ENCODE measurements at regions of chr4 and their contacts with region 1.

Region 1: DNA sequence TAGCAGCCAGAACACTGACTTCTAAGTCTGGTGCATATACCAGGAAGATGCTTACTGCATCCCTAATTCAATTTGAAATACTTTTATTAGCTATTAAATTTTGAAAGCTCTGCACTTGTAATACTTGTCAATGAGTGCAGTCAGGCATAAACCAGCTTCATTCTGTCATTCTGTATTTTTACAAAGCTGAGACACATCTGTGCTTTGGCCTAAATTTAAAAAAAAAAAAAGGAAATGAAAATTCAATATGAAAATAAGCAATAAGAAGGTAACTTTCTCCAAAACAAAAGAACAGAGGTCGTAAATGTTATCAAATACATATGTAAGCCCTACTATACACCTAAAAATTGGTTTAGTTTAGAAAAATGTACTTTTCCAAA is 7.0 kb downstream of the SMIM14 start:
- DNase-seq: no peak
- ATAC-seq: peak; percentile 70
- H3K4me3 Mint-ChIP-seq: peak overlapping the region; percentile 44
- H3K27ac Mint-ChIP-seq: peak overlapping the region; percentile 96
- H3K4me1 Mint-ChIP-seq: peaks cover 86% of the 10 kb centered on the region
- H3K27me3 Mint-ChIP-seq: no peaks in the 10 kb centered on the region
- CTCF ChIP-seq: no peak

Region 2: GRCh38 chr4:39484582-39485272 is 147.0 kb before region 1 on chr4:
- CTCF ChIA-PET with region 1: no interaction called
- POLR2A ChIA-PET with region 1: no interaction called
- intact Hi-C with region 1: no loop called
- DNase-seq: no peak
- ATAC-seq: no peak
- H3K4me3 Mint-ChIP-seq: no peak overlapping the region
- H3K27ac Mint-ChIP-seq: no peak overlapping the region
- H3K4me1 Mint-ChIP-seq: no peaks in the 10 kb centered on the region
- H3K27me3 Mint-ChIP-seq: no peaks in the 10 kb centered on the region
- CTCF ChIP-seq: no peak

Region 3: DNA sequence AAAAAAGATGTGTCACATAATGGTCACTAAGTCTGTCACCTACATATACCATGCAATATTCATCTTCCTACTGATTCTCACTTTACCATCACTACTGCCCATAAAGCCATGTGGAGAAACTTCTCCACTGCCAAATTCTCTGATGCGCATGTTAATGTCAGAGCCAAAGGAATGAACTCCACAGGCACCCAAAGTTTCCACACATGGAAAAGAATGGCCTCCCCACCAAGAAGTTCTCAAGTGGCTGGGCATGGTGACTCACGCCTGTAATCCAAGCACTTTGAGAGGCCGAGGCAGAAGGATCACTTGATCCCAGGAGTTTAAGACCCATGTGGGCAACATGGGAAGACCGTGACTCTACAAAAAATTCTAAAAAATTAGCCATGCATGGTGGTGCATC is 60.6 kb before region 1 on chr4:
- CTCF ChIA-PET with region 1: no interaction called
- POLR2A ChIA-PET with region 1: interaction called, 15 read pairs
- intact Hi-C with region 1: loop called (anchors 2 kb)
- DNase-seq: no peak
- ATAC-seq: no peak
- H3K4me3 Mint-ChIP-seq: no peak overlapping the region
- H3K27ac Mint-ChIP-seq: peak overlapping the region; percentile 37
- H3K4me1 Mint-ChIP-seq: peaks cover 32% of the 10 kb centered on the region
- H3K27me3 Mint-ChIP-seq: no peaks in the 10 kb centered on the region
- CTCF ChIP-seq: no peak

Region 4: GRCh38 chr4:39657465-39657864 is 25.8 kb after region 1 on chr4:
- CTCF ChIA-PET with region 1: no interaction called
- POLR2A ChIA-PET with region 1: interaction called, 14 read pairs
- intact Hi-C with region 1: loop called (anchors 1 kb)
- DNase-seq: no peak
- ATAC-seq: peak; percentile 91
- H3K4me3 Mint-ChIP-seq: peak overlapping the region; percentile 71
- H3K27ac Mint-ChIP-seq: peak overlapping the region; percentile 81
- H3K4me1 Mint-ChIP-seq: peaks cover 35% of the 10 kb centered on the region
- H3K27me3 Mint-ChIP-seq: no peaks in the 10 kb centered on the region
- CTCF ChIP-seq: no peak

Measured in activated B cell treated with CpG ODN at 0.5 μM for 24 hours (primary cell).